Caco-2 (cell line): ENCODE measurements at regions of chr5 and their contacts with region 1.

Region 1: DNA sequence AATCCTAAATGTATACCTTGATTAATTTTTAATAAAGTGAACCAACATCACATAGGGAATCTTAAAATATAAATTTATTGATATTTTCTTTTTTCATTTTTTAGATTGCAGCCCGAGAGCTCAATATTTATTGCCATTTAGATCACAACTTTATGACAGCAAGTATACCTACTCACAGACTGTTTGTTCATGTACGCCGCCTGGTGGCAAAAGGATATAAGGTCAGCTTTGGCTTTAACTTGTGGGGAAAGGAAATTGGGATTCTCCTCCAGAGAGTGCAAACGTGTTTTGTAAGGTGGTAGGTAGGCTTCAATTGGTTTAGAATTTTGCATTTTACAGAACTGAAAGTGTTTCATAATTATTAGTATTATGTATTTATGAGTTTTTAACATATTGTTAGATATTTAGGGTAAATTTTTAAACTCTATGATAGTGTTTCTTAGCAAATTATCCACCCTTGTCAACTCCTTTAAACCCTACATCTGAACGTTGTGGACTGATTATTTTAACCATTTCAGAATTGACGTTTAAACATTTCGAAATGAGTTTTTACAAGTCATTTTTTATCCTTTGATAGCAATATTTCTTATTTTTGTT is 17.5 kb upstream of the DHFR start:
- DNase-seq: peak; percentile 76 to 77
- H3K4me3 ChIP-seq: no peak overlapping the region
- H3K4me3 Mint-ChIP-seq: no peak overlapping the region
- H3K27ac Mint-ChIP-seq: no peak overlapping the region
- H3K4me1 ChIP-seq: no peaks in the 10 kb centered on the region
- H3K4me1 Mint-ChIP-seq: no peaks in the 10 kb centered on the region
- H3K27me3 ChIP-seq: no peaks in the 10 kb centered on the region
- H3K27me3 Mint-ChIP-seq: no peaks in the 10 kb centered on the region
- CTCF ChIP-seq: peak; percentile 77 to 87

Region 2: DNA sequence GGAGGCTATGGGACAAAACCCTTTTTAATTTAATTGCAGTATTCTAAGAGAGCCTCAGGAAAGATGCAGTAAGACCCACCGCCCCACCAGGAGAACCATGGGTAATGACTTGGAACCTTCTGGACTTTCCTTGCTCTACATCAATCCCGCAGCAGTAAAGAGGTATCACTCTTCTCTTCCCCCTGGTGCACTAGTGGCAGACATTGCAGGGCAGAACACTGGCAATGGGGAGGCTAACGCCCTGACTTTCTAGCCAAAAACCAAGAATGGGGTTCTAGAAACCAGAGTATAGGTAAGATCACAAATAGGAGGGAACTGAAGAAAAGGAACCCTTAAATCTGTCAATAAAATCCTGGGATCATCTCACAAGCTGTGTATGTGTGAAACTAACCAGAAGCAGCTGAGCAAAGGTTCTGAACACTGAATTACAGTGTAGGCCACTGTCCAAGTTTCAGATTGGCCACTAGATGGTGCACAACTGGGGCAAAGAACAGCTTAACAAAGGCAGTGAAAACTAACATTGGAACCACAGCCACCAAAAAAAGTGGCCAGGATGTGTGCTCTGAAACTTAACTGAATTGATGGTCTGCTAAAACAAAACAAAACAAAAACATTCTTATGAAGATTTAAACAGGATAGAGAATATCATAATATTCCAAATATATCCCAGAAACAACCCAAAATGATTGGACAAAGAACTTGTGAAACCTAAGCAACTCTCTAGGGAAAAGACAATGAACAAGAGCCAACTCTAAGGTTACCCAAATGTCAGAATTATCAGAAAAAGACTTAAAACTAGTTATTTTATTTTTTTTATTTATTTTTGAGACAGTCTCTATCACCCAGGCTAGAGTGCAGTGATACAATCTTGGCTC is 191.0 kb before region 1 on chr5:
- CTCF ChIA-PET with region 1: interaction called, 7 read pairs
- POLR2A ChIA-PET with region 1: no interaction called
- intact Hi-C with region 1: loop called (anchors 1 kb)
- DNase-seq: peak; percentile 53 to 66
- H3K4me3 ChIP-seq: no peak overlapping the region
- H3K4me3 Mint-ChIP-seq: no peak overlapping the region
- H3K27ac Mint-ChIP-seq: no peak overlapping the region
- H3K4me1 ChIP-seq: no peaks in the 10 kb centered on the region
- H3K4me1 Mint-ChIP-seq: no peaks in the 10 kb centered on the region
- H3K27me3 ChIP-seq: no peaks in the 10 kb centered on the region
- H3K27me3 Mint-ChIP-seq: no peaks in the 10 kb centered on the region
- CTCF ChIP-seq: peak; percentile 72 to 87